ENCODE measurements at regions of chr3 and their contacts with region 1.

Region 1: DNA sequence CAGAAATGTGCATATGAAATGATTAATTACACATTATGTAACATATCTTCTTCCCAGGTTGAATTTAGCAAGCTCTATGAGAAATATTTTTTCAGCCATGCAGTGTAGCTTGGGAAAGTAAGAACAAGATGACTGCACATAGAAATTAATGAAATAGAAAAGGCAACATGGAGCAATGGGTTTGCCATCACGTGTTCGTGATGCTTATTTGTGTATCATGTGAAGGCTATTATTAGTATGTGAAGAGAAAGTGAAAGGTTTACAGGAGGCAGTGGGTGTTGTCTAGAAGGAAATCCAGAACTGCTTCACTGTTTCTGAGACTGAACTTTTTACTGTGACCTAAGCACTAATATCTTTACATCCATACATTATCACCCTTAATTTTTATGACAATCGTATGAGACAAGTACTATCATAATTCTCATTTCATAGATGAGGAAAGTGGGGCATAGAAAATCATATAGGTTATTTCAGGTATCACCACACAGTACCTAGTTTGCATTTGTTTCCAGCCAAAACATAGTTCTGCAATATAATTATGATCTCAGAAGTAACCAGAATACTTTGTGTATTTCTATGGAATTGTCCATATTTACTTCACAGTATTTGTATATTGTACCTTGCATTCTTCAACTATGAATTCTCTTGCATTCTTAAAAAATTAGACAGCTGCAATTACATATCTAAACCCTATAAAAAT is 14.9 kb downstream of the SERPINI1 start:
- DNase-seq: peak; percentile 38 to 86 (median 75)
- H3K4me3 ChIP-seq: peak overlapping the region in 3 of 7 experiments; percentile 6 to 40 (median 23)
- H3K27ac ChIP-seq: no peak overlapping the region
- H3K4me1 ChIP-seq: peaks cover 0 to 17% (median 7%) of the 10 kb centered on the region in 4 experiments
- H3K27me3 ChIP-seq: no peaks in the 10 kb centered on the region

Region 2: DNA sequence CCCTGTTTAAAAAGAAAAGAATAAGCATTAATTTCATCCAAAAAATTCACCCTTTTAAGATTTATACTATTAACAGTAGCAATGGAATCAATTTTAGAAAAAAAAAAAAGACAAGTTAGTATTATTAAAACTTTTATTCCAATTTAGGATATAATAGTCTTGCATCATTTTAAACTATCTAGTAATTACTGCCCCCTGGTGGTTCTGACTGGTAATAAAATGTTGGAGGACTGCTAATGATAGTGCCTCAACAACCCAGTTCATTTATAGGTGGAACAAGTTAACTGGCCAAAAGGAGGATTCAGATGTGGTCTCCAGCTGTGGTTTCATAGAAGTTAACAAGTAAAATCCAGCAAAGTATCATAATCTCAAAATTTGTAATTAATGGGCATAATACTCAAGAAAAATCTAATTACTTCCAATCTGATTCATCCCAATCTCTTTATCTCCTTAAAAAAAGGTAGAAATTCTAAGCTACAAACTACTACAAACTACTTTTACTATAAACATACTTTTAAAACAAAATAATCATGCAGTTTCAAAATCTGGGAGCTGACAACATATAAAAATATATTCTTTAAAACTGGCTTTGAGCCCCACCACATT is 65.9 kb before region 1 on chr3:
- CTCF ChIA-PET with region 1: interaction called, 10 read pairs
- POLR2A ChIA-PET with region 1: no interaction called
- DNase-seq: peak; percentile 67 to 83 (median 72)
- H3K4me3 ChIP-seq: no peak overlapping the region
- H3K27ac ChIP-seq: no peak overlapping the region
- H3K4me1 ChIP-seq: no peaks in the 10 kb centered on the region
- H3K27me3 ChIP-seq: no peaks in the 10 kb centered on the region

Region 3: GRCh38 chr3:167734498-167735232 is 15.8 kb before region 1 on chr3 and contains the start of gene PDCD10:
- CTCF ChIA-PET with region 1: interaction called, 13 read pairs
- POLR2A ChIA-PET with region 1: interaction called, 3 read pairs
- DNase-seq: peak; percentile 99 to 100 (median 99)
- H3K4me3 ChIP-seq: peak within 1 kb of the TSS; percentile 63 to 99 (median 97)
- H3K27ac ChIP-seq: peak within 1 kb of the TSS; percentile 69 to 90
- H3K4me1 ChIP-seq: peaks cover 3 to 45% (median 21%) of the 10 kb centered on the region in 4 experiments
- H3K27me3 ChIP-seq: no peaks in the 10 kb centered on the region

Measured in common myeloid progenitor, CD34-positive (primary cell).